ENCODE measurements at regions of chr4 and their contacts with region 1.

Region 1: GRCh38 chr4:2281575-2282343 is 19.9 kb upstream of the MXD4 start:
- DNase-seq: peak; percentile 74
- H3K4me3 Mint-ChIP-seq: peak overlapping the region; percentile 45
- H3K27ac Mint-ChIP-seq: peak overlapping the region; percentile 90
- H3K4me1 Mint-ChIP-seq: peaks cover 30% of the 10 kb centered on the region
- H3K27me3 Mint-ChIP-seq: no peaks in the 10 kb centered on the region

Region 2: GRCh38 chr4:1736812-1737211 is 544.9 kb before region 1 on chr4:
- intact Hi-C with region 1: no loop called
- DNase-seq: no peak
- H3K4me3 Mint-ChIP-seq: no peak overlapping the region
- H3K27ac Mint-ChIP-seq: no peak overlapping the region
- H3K4me1 Mint-ChIP-seq: no peaks in the 10 kb centered on the region
- H3K27me3 Mint-ChIP-seq: no peaks in the 10 kb centered on the region

Region 3: GRCh38 chr4:2296631-2297601 is 15.2 kb after region 1 on chr4:
- intact Hi-C with region 1: no loop called
- DNase-seq: no peak
- H3K4me3 Mint-ChIP-seq: no peak overlapping the region
- H3K27ac Mint-ChIP-seq: peak overlapping the region; percentile 44
- H3K4me1 Mint-ChIP-seq: peaks cover 7% of the 10 kb centered on the region
- H3K27me3 Mint-ChIP-seq: peaks cover 18% of the 10 kb centered on the region

Region 4: GRCh38 chr4:2330091-2331042 is 48.6 kb after region 1 on chr4:
- intact Hi-C with region 1: loop called (anchors 10 kb)
- DNase-seq: no peak
- H3K4me3 Mint-ChIP-seq: no peak overlapping the region
- H3K27ac Mint-ChIP-seq: no peak overlapping the region
- H3K4me1 Mint-ChIP-seq: no peaks in the 10 kb centered on the region
- H3K27me3 Mint-ChIP-seq: peaks cover 3% of the 10 kb centered on the region

Region 5: GRCh38 chr4:2412885-2413716 is 131.3 kb after region 1 on chr4:
- intact Hi-C with region 1: loop called (anchors 2 kb)
- DNase-seq: peak; percentile 88
- H3K4me3 Mint-ChIP-seq: peak overlapping the region; percentile 64
- H3K27ac Mint-ChIP-seq: peak overlapping the region; percentile 93
- H3K4me1 Mint-ChIP-seq: peaks cover 69% of the 10 kb centered on the region
- H3K27me3 Mint-ChIP-seq: peaks cover 16% of the 10 kb centered on the region

Region 6: GRCh38 chr4:2462218-2462991 is 180.6 kb after region 1 on chr4:
- intact Hi-C with region 1: loop called (anchors 2 kb)
- DNase-seq: peak; percentile 57
- H3K4me3 Mint-ChIP-seq: peak overlapping the region; percentile 71
- H3K27ac Mint-ChIP-seq: no peak overlapping the region
- H3K4me1 Mint-ChIP-seq: peaks cover 4% of the 10 kb centered on the region
- H3K27me3 Mint-ChIP-seq: peaks cover 22% of the 10 kb centered on the region